HepG2 (cell line): ENCODE measurements at regions of chr2 and their contacts with region 1.

Region 1: DNA sequence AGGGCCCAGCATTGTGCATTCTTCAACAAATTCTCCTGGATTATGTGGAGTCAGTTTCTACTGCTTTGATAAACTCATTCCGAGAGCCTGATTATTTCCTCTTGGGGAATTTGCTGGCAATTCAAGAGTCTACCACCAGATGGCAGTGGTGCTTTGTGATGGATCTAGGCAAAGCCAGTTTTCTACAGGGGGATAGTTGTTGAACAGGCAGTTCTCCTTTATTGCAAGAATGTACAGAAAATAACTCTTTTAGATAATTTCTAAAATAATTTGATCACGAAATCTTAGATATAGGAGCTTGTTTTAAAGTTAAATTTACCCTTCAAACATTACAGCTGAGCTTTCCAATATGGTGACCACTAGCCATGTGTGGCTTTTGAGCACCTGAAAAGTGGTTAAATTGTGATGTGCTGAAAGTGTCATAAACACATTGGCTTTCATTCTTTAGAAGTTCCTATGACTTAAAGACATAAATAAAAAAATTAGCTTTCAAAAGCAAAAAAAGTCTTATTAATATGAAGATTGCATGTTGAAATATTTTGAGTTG is 66.7 kb upstream of the HAAO start:
- DNase-seq: peak; percentile 81
- ATAC-seq: no peak
- H3K4me3 ChIP-seq: no peak overlapping the region
- H3K27ac ChIP-seq: no peak overlapping the region
- H3K4me1 ChIP-seq: peaks cover 26% of the 10 kb centered on the region
- H3K27me3 ChIP-seq: peaks cover 2 to 16% of the 10 kb centered on the region in 2 experiments; a peak in 2 of 5 replicates
- CTCF ChIP-seq: peak; percentile 91
- EP300 ChIP-seq: 0 out of 4 replicates have a peak, but pooled peaks of 1 of the 2 experiments have one; percentile 3
- POLR2A ChIP-seq: no peak
- RAD21 ChIP-seq: peak; percentile 88

Region 2: DNA sequence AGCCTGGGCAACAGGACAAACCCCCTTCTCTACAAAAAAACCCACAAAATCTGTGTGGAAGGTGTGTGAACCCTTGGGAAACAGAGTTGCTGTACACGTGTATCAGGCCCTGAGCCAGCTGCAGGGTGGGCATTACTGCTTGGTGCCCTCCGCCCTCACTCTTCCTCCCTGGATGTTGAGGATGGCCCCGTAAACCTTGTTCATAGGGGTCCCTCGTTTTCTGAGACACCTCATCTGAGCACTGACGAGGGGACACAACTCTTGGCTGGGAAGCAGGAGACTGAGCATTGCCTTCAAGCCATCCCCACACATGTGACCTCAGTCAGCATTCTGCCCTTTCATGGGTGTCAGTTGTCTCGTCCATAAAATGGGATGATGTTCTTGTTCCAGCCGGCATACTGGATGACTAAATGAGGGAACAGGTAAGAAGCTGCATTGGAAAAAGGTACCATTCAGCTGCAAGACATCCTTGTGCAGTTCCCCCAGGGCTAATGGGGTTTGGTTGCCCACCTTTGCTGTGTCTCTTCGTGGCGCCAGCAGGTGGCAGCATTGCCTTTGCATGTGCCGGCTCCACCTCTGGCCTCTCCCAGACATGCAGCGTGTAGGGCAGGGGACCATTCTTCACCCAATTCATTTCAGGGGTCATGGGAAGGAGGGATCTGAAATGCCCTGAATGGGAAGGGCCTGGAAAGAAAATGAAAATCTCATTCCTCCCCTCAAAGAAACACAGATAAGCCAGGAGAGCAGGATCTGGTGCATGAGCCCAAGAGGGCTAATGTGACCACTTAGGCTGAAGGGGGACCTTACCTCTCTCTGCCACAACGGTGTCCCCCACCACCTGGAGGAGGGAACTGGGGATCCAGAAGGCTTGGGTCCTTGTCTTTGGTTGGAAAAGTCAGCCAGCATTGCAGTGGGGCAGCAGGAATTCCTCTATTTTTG is 30.3 kb before region 1 on chr2:
- CTCF ChIA-PET with region 1: interaction called, 12 read pairs
- POLR2A ChIA-PET with region 1: no interaction called
- in situ Hi-C with region 1: no loop called
- intact Hi-C with region 1: loop called (anchors 1 kb)
- DNase-seq: peak; percentile 66
- ATAC-seq: peak; percentile 94
- H3K4me3 ChIP-seq: no peak overlapping the region
- H3K27ac ChIP-seq: no peak overlapping the region
- H3K4me1 ChIP-seq: peaks cover 31% of the 10 kb centered on the region
- H3K27me3 ChIP-seq: peaks cover 0 to 22% of the 10 kb centered on the region in 2 experiments; a peak in 3 of 5 replicates
- CTCF ChIP-seq: peak; percentile 99
- EP300 ChIP-seq: no peak
- POLR2A ChIP-seq: no peak
- RAD21 ChIP-seq: peak; percentile 95

Region 3: GRCh38 chr2:42886921-42887320 is 27.8 kb after region 1 on chr2:
- CTCF ChIA-PET with region 1: no interaction called
- POLR2A ChIA-PET with region 1: no interaction called
- in situ Hi-C with region 1: no loop called
- intact Hi-C with region 1: no loop called
- DNase-seq: no peak
- ATAC-seq: no peak
- H3K4me3 ChIP-seq: no peak overlapping the region
- H3K27ac ChIP-seq: no peak overlapping the region
- H3K4me1 ChIP-seq: 0 out of 2 replicates have a peak, but pooled peaks cover 5% of the 10 kb centered on the region
- H3K27me3 ChIP-seq: no peaks in the 10 kb centered on the region
- CTCF ChIP-seq: no peak
- EP300 ChIP-seq: no peak
- POLR2A ChIP-seq: no peak
- RAD21 ChIP-seq: no peak

Region 4: DNA sequence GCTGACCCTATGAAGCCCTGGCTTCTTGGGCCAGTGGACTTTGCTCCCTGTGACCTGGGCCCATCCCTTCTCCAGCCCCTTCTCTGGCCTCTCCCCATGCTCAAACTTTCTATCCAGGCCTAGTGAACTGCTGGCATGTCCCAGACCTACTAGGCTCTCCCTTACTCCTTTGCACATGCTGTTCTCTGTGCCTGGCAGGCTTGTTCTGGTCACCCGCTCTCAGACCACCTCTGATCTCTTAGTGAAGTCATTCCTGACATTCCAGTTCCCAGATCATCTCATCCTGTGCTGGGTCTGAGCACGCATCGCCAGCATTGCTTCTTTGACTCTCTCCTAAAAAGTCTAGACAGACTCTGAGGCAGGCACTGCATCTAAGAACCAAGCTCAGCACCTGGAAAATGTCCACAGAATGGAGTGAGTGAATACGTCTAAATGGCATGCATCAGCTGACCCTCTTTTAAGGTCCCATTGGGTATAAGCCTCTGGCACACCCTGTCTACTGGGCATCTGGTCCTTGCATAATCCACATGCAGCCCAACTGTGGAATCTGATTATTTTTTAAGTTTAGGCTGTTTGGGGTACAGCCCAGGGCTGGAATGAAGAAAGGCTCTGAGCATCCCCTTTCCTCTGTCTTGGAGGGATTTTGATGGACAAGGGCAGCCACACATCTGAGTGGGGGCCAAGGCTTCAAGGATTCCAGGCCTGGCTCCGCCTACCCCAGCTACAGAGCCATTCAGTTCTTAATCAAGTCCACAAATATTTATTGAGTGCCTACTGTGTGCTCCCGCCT is 63.9 kb after region 1 on chr2:
- CTCF ChIA-PET with region 1: no interaction called
- POLR2A ChIA-PET with region 1: interaction called, 10 read pairs
- in situ Hi-C with region 1: loop called (anchors 5 kb)
- intact Hi-C with region 1: loop called (anchors 2 kb)
- DNase-seq: peak; percentile 42
- ATAC-seq: no peak
- H3K4me3 ChIP-seq: peak overlapping the region in 1 of 3 experiments; percentile 8; a peak in 1 of 6 replicates
- H3K27ac ChIP-seq: no peak overlapping the region
- H3K4me1 ChIP-seq: peaks cover 69% of the 10 kb centered on the region
- H3K27me3 ChIP-seq: peaks cover 0 to 7% of the 10 kb centered on the region in 2 experiments; a peak in 2 of 5 replicates
- CTCF ChIP-seq: no peak
- EP300 ChIP-seq: no peak
- POLR2A ChIP-seq: no peak
- RAD21 ChIP-seq: no peak

Region 5: GRCh38 chr2:42944779-42945415 is 85.8 kb after region 1 on chr2:
- CTCF ChIA-PET with region 1: interaction called, 6 read pairs
- POLR2A ChIA-PET with region 1: interaction called, 8 read pairs
- in situ Hi-C with region 1: no loop called
- intact Hi-C with region 1: loop called (anchors 2 kb)
- DNase-seq: peak; percentile 59
- ATAC-seq: 0 out of 3 replicates have a peak, but pooled peaks have one; percentile 4
- H3K4me3 ChIP-seq: no peak overlapping the region
- H3K27ac ChIP-seq: no peak overlapping the region
- H3K4me1 ChIP-seq: peaks cover 95% of the 10 kb centered on the region
- H3K27me3 ChIP-seq: no peaks in the 10 kb centered on the region
- CTCF ChIP-seq: no peak
- EP300 ChIP-seq: no peak
- POLR2A ChIP-seq: no peak
- RAD21 ChIP-seq: no peak

Region 6: DNA sequence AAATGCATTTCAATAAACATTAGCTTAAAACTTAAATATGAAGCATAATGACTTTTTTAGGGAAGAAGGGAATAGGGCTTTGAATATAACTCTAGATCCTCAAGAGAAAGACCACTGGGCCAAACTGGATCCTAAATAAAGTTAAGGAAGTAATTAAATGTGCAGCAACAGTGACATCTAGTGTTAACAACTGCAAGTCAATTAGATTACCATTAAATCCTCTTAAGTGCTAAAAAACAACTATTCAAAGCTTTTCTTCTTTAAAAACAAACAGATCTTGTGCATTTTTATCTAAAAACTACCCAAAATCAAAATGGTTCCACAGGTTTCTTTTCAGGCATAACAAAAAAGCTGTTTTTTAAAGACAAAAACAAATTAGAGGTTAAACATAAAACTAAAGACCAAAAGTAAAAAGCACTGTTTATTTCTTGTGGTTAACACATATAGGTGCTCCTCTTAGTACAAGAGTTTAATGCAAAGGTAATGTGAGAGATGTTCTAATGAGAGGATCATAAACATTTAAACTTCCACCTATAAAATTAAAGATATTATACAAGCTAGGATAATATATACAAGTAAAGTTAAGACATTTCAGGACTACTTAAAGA is 625.3 kb after region 1 on chr2:
- CTCF ChIA-PET with region 1: interaction called, 6 read pairs
- POLR2A ChIA-PET with region 1: no interaction called
- in situ Hi-C with region 1: loop called (anchors 10 kb)
- intact Hi-C with region 1: loop called (anchors 10 kb)
- DNase-seq: peak; percentile 85
- ATAC-seq: no peak
- H3K4me3 ChIP-seq: no peak overlapping the region
- H3K27ac ChIP-seq: no peak overlapping the region
- H3K4me1 ChIP-seq: peaks cover 15% of the 10 kb centered on the region; the same call in 1 of the 2 replicates
- H3K27me3 ChIP-seq: no peaks in the 10 kb centered on the region
- CTCF ChIP-seq: peak; percentile 79
- EP300 ChIP-seq: no peak
- POLR2A ChIP-seq: no peak
- RAD21 ChIP-seq: peak; percentile 84